ENCODE measurements at regions of chr12 and their contacts with region 1.

Region 1: GRCh38 chr12:52395761-52396434 is 10.2 kb downstream of the KRT82 start:
- DNase-seq: no peak
- H3K4me3 ChIP-seq: no peak overlapping the region
- H3K27ac ChIP-seq: no peak overlapping the region
- H3K4me1 ChIP-seq: peaks cover 0 to 17% (median 5%) of the 10 kb centered on the region in 4 donors
- H3K27me3 ChIP-seq: peaks cover 0 to 24% of the 10 kb centered on the region in 2 donors
- CTCF ChIP-seq: no peak

Region 2: DNA sequence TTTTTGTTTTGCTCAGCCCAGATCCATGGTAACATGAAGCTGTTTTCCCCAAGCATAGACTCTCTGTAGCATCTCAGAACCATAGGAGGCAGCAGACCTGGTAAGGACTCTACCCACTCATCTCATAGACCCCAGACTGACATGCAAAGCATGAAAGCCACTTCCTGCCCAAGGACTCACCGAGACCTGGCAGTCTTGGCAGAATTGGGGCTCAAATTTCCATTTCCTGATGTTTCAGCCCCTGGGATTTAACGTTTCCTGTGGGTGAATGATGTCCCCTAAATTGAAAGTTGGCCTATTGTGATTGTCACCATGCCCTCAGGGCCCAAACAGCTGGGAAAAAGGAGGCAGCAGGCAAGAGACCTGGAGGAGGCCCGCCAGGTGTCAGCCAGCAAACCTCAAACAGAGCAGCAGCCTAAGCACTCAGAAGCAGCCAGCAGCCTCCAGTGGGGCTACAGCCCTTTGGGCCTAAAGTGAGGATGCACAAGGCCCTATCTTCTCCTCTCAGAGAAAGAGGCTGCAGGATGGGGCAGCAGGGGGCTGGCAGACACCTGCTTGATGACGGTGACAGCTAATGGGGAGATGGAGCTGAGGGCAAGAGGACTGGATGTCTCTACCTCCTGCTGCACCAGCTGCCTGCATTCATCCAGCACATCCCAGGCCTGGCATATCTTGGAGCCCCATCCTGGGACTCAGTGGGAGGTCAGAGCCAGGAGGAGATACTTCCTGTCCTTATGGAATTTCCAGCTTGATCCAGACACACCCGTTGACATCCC is 37.1 kb before region 1 on chr12:
- intact Hi-C with region 1: no loop called
- DNase-seq: peak in 1 of 2 donors; percentile 43
- H3K4me3 ChIP-seq: no peak overlapping the region
- H3K27ac ChIP-seq: no peak overlapping the region
- H3K4me1 ChIP-seq: no peaks in the 10 kb centered on the region
- H3K27me3 ChIP-seq: peaks cover 0 to 36% of the 10 kb centered on the region in 2 donors
- CTCF ChIP-seq: no peak

Region 3: GRCh38 chr12:52506858-52507715 is 111.2 kb after region 1 on chr12:
- intact Hi-C with region 1: no loop called
- DNase-seq: no peak
- H3K4me3 ChIP-seq: no peak overlapping the region
- H3K27ac ChIP-seq: no peak overlapping the region
- H3K4me1 ChIP-seq: peaks cover 0 to 3% (median 0%) of the 10 kb centered on the region in 4 donors
- H3K27me3 ChIP-seq: no peaks in the 10 kb centered on the region
- CTCF ChIP-seq: peak; percentile 43 to 49

Region 4: DNA sequence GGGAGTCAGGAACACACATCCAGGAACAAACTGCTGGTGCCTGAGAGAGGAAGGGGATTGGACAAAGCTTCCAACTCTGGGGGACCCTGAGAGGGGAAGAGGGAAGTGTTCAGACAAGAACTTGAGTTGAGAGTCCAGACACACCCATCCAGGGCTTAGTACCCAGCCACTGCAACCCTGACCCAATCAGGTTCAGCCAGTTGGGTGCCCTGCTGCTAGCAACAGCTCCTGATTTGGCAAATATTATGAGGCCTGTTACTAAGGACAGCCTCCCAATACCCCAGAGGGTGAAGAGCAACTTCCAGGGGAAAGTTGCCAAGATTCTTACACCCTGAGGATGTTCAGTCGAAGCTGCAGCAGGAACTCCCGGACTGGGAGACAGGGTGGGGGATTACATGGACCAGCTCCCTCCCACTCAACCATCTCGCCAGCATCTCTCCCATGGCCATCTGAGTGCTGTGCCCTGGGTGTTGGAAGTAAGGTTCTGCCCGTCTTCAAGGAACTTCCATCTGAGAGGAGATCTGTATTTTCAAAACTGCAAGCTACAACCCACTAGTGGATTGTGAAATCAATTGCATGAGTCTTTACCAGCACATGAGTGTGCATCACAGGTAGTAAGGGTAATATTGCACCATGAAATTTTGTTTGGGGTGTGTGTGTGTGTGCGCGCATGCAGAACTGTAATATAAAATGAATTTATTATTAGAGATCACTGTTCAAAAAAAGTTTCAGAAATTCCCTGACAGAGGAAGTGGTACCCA is 464.3 kb after region 1 on chr12:
- intact Hi-C with region 1: loop called (anchors 5 kb)
- DNase-seq: no peak
- H3K4me3 ChIP-seq: no peak overlapping the region
- H3K27ac ChIP-seq: no peak overlapping the region
- H3K4me1 ChIP-seq: peaks cover 0 to 7% (median 0%) of the 10 kb centered on the region in 4 donors
- H3K27me3 ChIP-seq: no peaks in the 10 kb centered on the region
- CTCF ChIP-seq: no peak